ENCODE measurements at regions of chr1 and their contacts with region 1.

Region 1: DNA sequence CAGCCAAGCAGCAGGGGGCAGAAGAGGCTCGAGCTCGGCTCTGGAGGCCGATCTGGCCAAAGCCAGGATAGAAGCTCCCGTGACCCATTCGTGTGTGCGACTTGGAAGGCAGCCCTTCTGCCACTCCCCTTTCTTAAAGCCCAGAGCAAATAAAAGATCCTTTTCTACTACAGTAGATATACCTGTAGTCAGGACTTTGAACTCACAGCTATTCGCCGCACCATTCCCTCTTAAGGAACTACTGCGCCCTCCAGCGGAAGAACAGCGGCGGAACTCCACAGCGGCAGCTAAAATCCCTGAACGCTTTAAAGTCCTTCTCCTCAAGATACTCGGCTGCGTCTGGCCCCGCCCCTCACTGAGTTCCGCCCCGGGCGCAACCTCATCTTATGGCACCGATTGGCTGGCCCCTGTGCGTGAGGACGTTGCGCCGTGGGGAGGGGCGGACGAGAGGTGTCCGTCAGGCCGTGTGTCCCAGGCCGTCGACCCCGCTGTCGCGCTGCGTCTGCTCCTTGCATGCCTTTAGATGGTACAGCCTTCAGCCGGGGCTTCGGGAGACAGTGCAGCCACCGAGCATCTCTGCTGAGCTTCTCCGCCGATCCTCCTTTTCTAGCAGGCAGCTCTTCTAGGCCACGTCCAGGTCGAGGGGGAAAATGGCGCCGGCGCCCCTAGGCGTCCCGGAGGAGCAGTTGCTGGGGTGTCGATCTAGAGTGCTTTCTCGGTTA is at the start of gene LRIG2:
- DNase-seq: peak; percentile 95 to 97 (median 96)
- H3K4me3 ChIP-seq: peak within 1 kb of the TSS; percentile 79
- H3K4me3 Mint-ChIP-seq: peak within 1 kb of the TSS; percentile 96 to 99 (median 99)
- H3K27ac ChIP-seq: peak within 1 kb of the TSS; percentile 93
- H3K27ac Mint-ChIP-seq: peak within 1 kb of the TSS; percentile 86 to 100 (median 96)
- H3K4me1 ChIP-seq: peaks cover 27% of the 10 kb centered on the region
- H3K4me1 Mint-ChIP-seq: peaks cover 31 to 45% (median 36%) of the 10 kb centered on the region in 3 donors
- H3K27me3 ChIP-seq: no peaks in the 10 kb centered on the region
- H3K27me3 Mint-ChIP-seq: no peaks in the 10 kb centered on the region
- total RNA-seq, gene LRIG2: 8.1 to 8.2 TPM

Region 2: DNA sequence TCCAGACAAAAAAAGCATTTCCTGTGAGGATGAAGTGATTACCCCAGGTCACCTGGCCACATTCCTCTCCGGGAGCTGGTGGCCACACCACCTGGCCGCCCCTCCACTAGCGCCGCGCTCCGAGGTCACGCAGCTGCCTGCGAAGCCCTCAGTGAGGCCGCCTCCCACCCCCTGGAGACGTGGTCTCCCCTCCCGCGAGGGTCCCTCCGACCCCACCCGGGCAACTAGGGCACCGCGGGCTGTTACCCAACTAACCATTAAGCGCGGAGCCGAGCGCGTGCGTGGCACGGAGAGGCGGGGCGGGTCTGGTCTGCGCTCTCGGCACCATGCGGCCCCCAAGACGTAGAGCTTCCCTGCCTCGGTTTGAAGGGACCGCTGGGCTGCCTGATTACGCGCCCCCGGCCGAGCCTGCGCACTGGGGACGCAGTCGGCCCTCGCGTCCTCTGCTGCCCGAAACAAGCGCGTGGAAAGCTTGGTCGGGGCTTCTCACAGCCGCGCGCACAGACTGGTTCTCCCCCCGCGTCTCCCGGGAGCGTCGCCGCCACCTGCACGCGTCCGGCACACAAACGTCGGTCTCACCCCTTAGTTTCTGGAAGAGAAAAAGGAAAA is 223.4 kb before region 1 on chr1:
- CTCF ChIA-PET with region 1: no interaction called
- POLR2A ChIA-PET with region 1: no interaction called
- DNase-seq: no peak
- H3K4me3 ChIP-seq: no peak overlapping the region
- H3K4me3 Mint-ChIP-seq: peak overlapping the region in 1 of 7 donors; percentile 50
- H3K27ac ChIP-seq: no peak overlapping the region
- H3K27ac Mint-ChIP-seq: no peak overlapping the region
- H3K4me1 ChIP-seq: no peaks in the 10 kb centered on the region
- H3K4me1 Mint-ChIP-seq: peaks cover 0 to 3% (median 1%) of the 10 kb centered on the region in 3 donors
- H3K27me3 ChIP-seq: peaks cover 3% of the 10 kb centered on the region
- H3K27me3 Mint-ChIP-seq: peaks cover 26 to 48% of the 10 kb centered on the region in 2 donors

Region 3: GRCh38 chr1:112882271-112882744 is 190.6 kb before region 1 on chr1:
- CTCF ChIA-PET with region 1: interaction called, 14 read pairs
- POLR2A ChIA-PET with region 1: no interaction called
- DNase-seq: no peak
- H3K4me3 ChIP-seq: no peak overlapping the region
- H3K4me3 Mint-ChIP-seq: no peak overlapping the region
- H3K27ac ChIP-seq: peak overlapping the region; percentile 57
- H3K27ac Mint-ChIP-seq: no peak overlapping the region
- H3K4me1 ChIP-seq: no peaks in the 10 kb centered on the region
- H3K4me1 Mint-ChIP-seq: no peaks in the 10 kb centered on the region
- H3K27me3 ChIP-seq: no peaks in the 10 kb centered on the region
- H3K27me3 Mint-ChIP-seq: peaks cover 3 to 9% of the 10 kb centered on the region in 2 donors

Region 4: DNA sequence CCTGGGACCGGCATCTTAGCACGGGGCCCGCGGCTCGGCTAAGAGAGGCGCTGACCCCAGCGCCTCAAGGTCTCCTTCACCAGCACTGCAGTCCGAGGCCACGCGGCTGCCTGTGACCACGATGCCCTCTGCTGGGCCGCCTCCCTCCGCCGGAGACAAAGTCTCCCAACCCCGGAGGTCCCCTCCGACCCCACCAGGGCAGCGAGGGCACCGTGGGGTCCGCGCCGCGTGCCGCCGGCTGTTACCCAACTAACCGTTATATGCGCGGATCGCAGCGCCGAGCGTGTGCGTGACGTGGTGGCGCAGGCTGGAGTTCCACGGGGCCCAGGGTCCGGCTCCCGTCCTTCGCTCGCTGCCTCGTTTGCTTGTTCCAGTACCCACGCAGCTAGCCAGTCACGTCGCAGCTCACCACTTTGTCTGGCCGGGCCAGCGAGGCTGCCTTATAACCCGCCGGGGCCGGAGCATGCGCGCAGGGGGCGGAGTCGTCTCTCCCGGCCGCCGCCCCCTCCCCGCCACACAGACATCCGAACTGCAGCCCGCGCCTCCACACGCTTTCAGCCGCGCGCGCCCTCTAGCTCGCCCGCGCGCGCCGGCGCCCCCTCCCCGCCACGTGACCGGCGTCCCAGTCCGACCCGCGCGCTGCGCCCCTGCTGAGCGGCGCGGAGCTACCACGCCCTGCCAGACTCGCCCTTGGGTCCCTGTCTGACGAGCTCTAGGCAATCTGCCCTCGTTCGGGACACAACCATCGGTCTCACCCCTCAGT is 117.0 kb before region 1 on chr1 and contains the start of gene SLC16A1:
- CTCF ChIA-PET with region 1: interaction called, 15 read pairs
- POLR2A ChIA-PET with region 1: no interaction called
- DNase-seq: peak; percentile 83 to 89 (median 84)
- H3K4me3 ChIP-seq: peak within 1 kb of the TSS; percentile 76
- H3K4me3 Mint-ChIP-seq: peak within 1 kb of the TSS; percentile 90 to 100 (median 99)
- H3K27ac ChIP-seq: peak within 1 kb of the TSS; percentile 92
- H3K27ac Mint-ChIP-seq: peak within 1 kb of the TSS; percentile 43 to 99 (median 95)
- H3K4me1 ChIP-seq: peaks cover 32% of the 10 kb centered on the region
- H3K4me1 Mint-ChIP-seq: peaks cover 54 to 70% (median 70%) of the 10 kb centered on the region in 3 donors
- H3K27me3 ChIP-seq: no peaks in the 10 kb centered on the region
- H3K27me3 Mint-ChIP-seq: no peaks in the 10 kb centered on the region
- total RNA-seq, gene SLC16A1: 75.3 to 75.8 TPM

Region 5: DNA sequence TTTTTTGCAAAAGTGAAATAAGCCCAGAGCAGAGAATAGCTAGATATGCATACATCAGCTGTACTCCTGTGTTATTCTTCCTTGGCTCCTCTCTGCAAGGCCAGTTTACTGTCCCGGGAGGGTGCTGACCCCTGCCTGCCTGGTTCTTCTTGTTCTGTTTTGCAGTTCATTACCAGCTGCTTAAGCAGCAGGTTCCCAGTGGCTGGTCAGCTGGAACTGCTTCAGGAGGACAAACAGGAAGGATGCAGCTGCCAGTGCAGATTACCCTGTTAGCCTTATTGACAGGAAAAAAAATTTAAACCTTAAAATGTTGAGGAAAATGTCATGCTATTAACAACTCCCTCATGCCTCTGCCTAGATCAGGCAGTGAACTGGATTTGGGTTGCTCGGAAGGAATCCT is 15.9 kb before region 1 on chr1:
- CTCF ChIA-PET with region 1: interaction called, 11 read pairs
- POLR2A ChIA-PET with region 1: no interaction called
- DNase-seq: no peak
- H3K4me3 ChIP-seq: no peak overlapping the region
- H3K4me3 Mint-ChIP-seq: no peak overlapping the region
- H3K27ac ChIP-seq: no peak overlapping the region
- H3K27ac Mint-ChIP-seq: peak overlapping the region in 1 of 8 donors; percentile 23
- H3K4me1 ChIP-seq: no peaks in the 10 kb centered on the region
- H3K4me1 Mint-ChIP-seq: peaks cover 5 to 11% (median 11%) of the 10 kb centered on the region in 3 donors
- H3K27me3 ChIP-seq: no peaks in the 10 kb centered on the region
- H3K27me3 Mint-ChIP-seq: no peaks in the 10 kb centered on the region

Region 6: DNA sequence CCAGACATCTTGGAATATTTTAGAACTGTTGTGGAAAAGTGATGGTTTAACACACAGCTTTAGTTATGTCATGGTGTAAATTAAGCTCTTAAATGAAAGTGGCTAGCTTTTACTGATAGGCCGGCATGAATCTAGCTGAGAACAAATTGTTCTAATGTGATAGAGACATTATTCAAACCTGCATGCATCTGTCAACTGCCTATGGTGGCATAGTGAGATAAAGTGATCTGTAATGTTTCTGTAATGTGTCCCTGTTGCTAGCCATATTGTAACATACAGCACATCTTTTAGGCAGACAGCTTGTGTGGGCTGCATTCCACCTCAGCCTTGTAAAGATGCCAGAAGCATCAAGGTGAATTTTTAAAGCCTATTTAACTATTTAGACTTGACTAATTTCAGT is 16.1 kb after region 1 on chr1:
- CTCF ChIA-PET with region 1: interaction called, 16 read pairs
- POLR2A ChIA-PET with region 1: no interaction called
- DNase-seq: no peak
- H3K4me3 ChIP-seq: no peak overlapping the region
- H3K4me3 Mint-ChIP-seq: no peak overlapping the region
- H3K27ac ChIP-seq: no peak overlapping the region
- H3K27ac Mint-ChIP-seq: peak overlapping the region in 2 of 8 donors; percentile 23 to 31
- H3K4me1 ChIP-seq: no peaks in the 10 kb centered on the region
- H3K4me1 Mint-ChIP-seq: peaks cover 42 to 56% (median 55%) of the 10 kb centered on the region in 3 donors
- H3K27me3 ChIP-seq: no peaks in the 10 kb centered on the region
- H3K27me3 Mint-ChIP-seq: no peaks in the 10 kb centered on the region

Region 7: GRCh38 chr1:113095790-113096455 is 23.0 kb after region 1 on chr1:
- CTCF ChIA-PET with region 1: interaction called, 16 read pairs
- POLR2A ChIA-PET with region 1: no interaction called
- DNase-seq: no peak
- H3K4me3 ChIP-seq: no peak overlapping the region
- H3K4me3 Mint-ChIP-seq: no peak overlapping the region
- H3K27ac ChIP-seq: no peak overlapping the region
- H3K27ac Mint-ChIP-seq: peak overlapping the region in 1 of 8 donors; percentile 33
- H3K4me1 ChIP-seq: no peaks in the 10 kb centered on the region
- H3K4me1 Mint-ChIP-seq: peaks cover 10 to 11% (median 11%) of the 10 kb centered on the region in 3 donors
- H3K27me3 ChIP-seq: no peaks in the 10 kb centered on the region
- H3K27me3 Mint-ChIP-seq: no peaks in the 10 kb centered on the region

Measured in CD8-positive, alpha-beta memory T cell (primary cell).